ENCODE measurements at regions of chr2 and their contacts with region 1.

Region 1: DNA sequence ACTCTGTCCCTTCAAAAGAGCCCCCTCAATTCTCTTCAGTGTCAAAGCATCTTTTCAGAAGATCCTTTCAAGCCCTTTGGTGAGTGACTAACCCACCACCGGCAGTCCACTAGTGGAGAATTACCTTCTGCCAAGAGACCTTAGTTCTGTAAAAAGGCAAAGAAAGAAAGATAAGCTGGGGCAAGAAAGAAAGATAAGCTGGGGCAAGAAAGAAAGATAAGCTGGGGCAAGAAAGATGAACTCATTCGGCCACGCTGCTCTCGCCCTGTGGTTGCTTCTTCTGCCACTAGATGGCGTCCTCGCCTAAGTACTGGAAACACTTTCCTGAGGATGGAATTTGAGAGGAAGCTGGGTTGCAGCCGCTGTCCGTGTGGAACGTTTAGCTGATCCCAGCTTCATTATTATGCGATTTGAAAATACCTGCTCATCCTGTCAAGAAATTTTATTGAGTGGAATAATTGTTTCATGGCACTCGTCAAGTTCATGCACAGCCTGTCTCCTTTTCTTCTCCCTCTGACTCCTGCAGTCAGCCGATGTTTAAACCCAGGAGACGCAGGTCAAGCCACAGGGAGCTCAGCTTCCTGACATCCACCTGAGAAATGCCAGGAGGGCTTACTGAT is 17.3 kb upstream of the ANXA4 start:
- DNase-seq: peak; percentile 85 to 92
- H3K4me3 ChIP-seq: peak overlapping the region; percentile 20
- H3K4me3 Mint-ChIP-seq: peak overlapping the region; percentile 66
- H3K27ac Mint-ChIP-seq: no peak overlapping the region
- H3K4me1 ChIP-seq: peaks cover 5% of the 10 kb centered on the region
- H3K4me1 Mint-ChIP-seq: peaks cover 12% of the 10 kb centered on the region
- H3K27me3 ChIP-seq: no peaks in the 10 kb centered on the region
- H3K27me3 Mint-ChIP-seq: no peaks in the 10 kb centered on the region
- CTCF ChIP-seq: peak; percentile 83 to 95

Region 2: GRCh38 chr2:69272803-69273471 is 451.7 kb before region 1 on chr2:
- CTCF ChIA-PET with region 1: no interaction called
- POLR2A ChIA-PET with region 1: no interaction called
- intact Hi-C with region 1: no loop called
- DNase-seq: peak in 1 of 2 experiments; percentile 7
- H3K4me3 ChIP-seq: no peak overlapping the region
- H3K4me3 Mint-ChIP-seq: no peak overlapping the region
- H3K27ac Mint-ChIP-seq: no peak overlapping the region
- H3K4me1 ChIP-seq: no peaks in the 10 kb centered on the region
- H3K4me1 Mint-ChIP-seq: no peaks in the 10 kb centered on the region
- H3K27me3 ChIP-seq: no peaks in the 10 kb centered on the region
- H3K27me3 Mint-ChIP-seq: peaks cover 33% of the 10 kb centered on the region
- CTCF ChIP-seq: no peak

Region 3: DNA sequence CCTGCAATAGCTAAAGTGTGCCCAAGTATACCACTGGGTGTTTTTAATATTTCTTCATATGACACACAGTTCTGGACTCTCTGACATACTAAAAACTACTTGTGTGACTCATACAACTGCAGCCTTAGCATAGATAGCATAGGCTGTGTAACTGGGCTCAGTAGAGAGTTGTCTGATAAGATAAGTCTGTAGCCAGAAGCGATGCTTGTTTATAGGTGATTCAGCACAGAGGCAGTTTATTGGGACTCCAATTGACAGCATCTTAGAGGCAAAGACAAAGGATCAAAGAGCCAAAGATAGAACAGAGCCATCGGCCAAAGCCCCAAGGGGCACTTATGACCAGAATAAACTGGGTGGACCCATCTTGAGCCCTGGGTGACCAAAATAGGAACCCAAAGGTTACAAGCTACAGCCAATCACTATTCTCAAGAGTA is 123.5 kb before region 1 on chr2:
- CTCF ChIA-PET with region 1: no interaction called
- POLR2A ChIA-PET with region 1: no interaction called
- intact Hi-C with region 1: no loop called
- DNase-seq: peak; percentile 77 to 81
- H3K4me3 ChIP-seq: no peak overlapping the region
- H3K4me3 Mint-ChIP-seq: peak overlapping the region; percentile 42
- H3K27ac Mint-ChIP-seq: peak overlapping the region; percentile 82
- H3K4me1 ChIP-seq: peaks cover 43% of the 10 kb centered on the region
- H3K4me1 Mint-ChIP-seq: peaks cover 41% of the 10 kb centered on the region
- H3K27me3 ChIP-seq: no peaks in the 10 kb centered on the region
- H3K27me3 Mint-ChIP-seq: no peaks in the 10 kb centered on the region
- CTCF ChIP-seq: no peak

Region 4: DNA sequence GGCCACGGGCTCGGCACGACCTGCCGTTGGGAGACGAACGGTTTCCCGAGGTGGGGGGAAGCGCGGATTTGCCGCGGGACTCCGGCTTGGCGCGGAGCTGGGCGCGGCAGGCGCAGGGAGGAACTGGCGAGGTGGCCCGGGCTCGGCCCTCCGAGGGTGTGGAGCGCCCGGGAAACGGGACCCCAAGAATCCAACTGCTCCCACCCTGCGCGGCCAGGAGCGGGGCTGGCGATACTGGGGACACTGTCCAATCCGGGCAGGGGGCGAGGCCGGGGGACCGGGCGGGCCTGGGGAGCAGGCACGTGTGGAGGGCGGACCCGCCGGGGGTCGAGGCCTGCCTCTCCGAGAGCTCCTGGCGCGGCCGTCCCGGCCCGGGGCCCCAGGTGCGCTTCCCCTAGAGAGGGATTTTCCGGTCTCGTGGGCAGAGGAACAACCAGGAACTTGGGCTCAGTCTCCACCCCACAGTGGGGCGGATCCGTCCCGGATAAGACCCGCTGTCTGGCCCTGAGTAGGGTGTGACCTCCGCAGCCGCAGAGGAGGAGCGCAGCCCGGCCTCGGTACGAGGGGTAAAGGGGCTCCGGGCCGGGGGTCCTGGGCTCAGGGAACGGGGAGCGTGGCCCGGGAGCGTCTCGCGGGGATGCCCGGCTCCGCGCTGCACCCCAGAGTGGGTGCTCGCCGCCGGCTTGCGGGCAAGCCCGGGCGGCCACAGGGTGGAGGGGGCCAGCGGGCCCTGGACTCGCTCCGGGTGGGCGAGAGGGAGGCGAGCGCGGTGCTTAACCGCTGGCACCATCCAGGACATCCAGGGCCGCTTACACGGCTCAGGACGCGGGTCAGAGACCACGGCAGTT is 17.2 kb after region 1 on chr2 and contains the start of gene ANXA4:
- CTCF ChIA-PET with region 1: interaction called, 52 read pairs
- POLR2A ChIA-PET with region 1: interaction called, 12 read pairs
- intact Hi-C with region 1: no loop called
- DNase-seq: peak; percentile 92 to 93
- H3K4me3 ChIP-seq: peak within 1 kb of the TSS; percentile 78
- H3K4me3 Mint-ChIP-seq: peak within 1 kb of the TSS; percentile 97
- H3K27ac Mint-ChIP-seq: peak within 1 kb of the TSS; percentile 96
- H3K4me1 ChIP-seq: peaks cover 20% of the 10 kb centered on the region
- H3K4me1 Mint-ChIP-seq: peaks cover 23% of the 10 kb centered on the region
- H3K27me3 ChIP-seq: no peaks in the 10 kb centered on the region
- H3K27me3 Mint-ChIP-seq: no peaks in the 10 kb centered on the region
- CTCF ChIP-seq: no peak
- total RNA-seq, gene ANXA4: 90.8 and 92.0 TPM in 2 replicates

Region 5: DNA sequence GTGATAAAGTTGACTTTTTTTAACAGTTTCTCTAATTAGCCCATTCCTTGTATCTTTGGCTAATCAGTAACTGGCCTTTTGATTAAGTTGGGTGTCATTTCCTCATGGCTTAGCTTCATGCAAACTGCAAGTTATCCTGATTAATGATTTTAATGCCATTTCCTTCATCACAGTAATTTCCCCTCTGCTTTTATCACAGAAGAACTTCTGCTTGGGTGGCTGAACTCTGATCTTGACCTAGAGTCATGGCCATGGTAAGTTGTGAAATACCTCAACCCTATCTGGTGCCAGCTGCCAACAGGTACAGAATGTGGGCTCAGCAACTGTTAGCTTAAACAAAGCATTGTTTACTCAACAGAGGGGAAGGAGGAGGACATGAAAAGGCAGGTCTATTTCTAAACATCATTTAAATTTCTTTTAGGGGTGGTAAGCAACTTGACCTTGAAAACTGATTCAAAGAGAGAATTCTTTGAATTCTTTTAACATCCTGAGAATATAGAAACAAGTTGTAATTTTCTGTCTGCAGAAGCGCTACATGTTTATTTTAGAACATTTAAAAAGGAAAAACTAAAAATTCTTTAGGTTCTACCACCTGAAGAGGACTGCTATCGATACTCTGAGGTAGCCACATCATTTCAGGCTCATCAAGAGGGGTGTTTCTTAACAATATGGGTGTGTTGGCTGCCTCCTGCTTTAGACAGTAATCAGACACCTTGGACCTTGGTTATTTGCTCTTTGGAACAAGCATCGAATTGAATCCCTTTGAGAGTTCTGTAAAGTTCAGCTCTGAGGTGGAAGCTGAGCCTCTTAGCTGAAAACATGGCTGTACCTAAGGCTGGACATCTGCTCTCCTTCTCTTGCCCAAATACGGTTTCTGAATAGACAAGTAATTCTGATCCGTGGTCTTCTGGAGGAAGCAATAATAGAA is 56.9 kb after region 1 on chr2:
- CTCF ChIA-PET with region 1: interaction called, 13 read pairs
- POLR2A ChIA-PET with region 1: no interaction called
- intact Hi-C with region 1: no loop called
- DNase-seq: peak; percentile 67 to 79
- H3K4me3 ChIP-seq: no peak overlapping the region
- H3K4me3 Mint-ChIP-seq: no peak overlapping the region
- H3K27ac Mint-ChIP-seq: peak overlapping the region; percentile 16
- H3K4me1 ChIP-seq: peaks cover 62% of the 10 kb centered on the region
- H3K4me1 Mint-ChIP-seq: peaks cover 39% of the 10 kb centered on the region
- H3K27me3 ChIP-seq: no peaks in the 10 kb centered on the region
- H3K27me3 Mint-ChIP-seq: no peaks in the 10 kb centered on the region
- CTCF ChIP-seq: no peak

Region 6: DNA sequence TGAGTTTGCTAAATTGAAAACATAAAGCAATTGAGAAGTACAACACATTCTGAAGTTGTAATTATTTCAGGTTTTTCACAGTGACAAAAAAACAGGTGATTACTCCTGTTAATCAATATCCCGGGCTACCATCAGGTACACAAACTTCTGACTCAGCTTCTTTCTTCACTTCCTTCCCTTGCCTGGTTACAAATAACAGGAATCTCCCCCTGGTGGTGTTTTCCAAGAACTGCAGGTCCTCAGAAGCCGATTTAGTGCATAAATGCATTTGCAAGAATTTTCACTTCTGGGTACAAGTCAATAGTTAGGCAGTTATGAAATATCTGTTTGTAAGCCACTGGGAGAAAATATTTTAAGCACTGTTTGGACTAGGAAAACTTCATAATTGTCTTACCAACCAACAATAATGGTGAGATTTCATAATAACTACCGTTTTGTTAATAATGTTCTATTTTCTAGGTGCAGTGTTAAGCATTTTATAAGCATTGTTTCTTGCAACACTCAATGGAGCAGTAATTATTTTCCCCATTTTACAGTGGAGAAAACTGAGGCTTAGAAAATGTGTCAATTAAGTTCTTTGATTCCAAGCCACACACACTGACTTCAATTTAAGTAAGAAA is 92.4 kb after region 1 on chr2:
- CTCF ChIA-PET with region 1: interaction called, 198 read pairs
- POLR2A ChIA-PET with region 1: interaction called, 9 read pairs
- intact Hi-C with region 1: loop called (anchors 1 kb)
- DNase-seq: peak; percentile 83 to 84
- H3K4me3 ChIP-seq: no peak overlapping the region
- H3K4me3 Mint-ChIP-seq: no peak overlapping the region
- H3K27ac Mint-ChIP-seq: no peak overlapping the region
- H3K4me1 ChIP-seq: no peaks in the 10 kb centered on the region
- H3K4me1 Mint-ChIP-seq: no peaks in the 10 kb centered on the region
- H3K27me3 ChIP-seq: no peaks in the 10 kb centered on the region
- H3K27me3 Mint-ChIP-seq: no peaks in the 10 kb centered on the region
- CTCF ChIP-seq: peak; percentile 90 to 91

Region 7: GRCh38 chr2:69893684-69894551 is 169.3 kb after region 1 on chr2 and contains the start of gene SNRNP27:
- CTCF ChIA-PET with region 1: interaction called, 12 read pairs
- POLR2A ChIA-PET with region 1: no interaction called
- intact Hi-C with region 1: no loop called
- DNase-seq: peak; percentile 77 to 81
- H3K4me3 ChIP-seq: peak within 1 kb of the TSS; percentile 51
- H3K4me3 Mint-ChIP-seq: peak within 1 kb of the TSS; percentile 87
- H3K27ac Mint-ChIP-seq: peak within 1 kb of the TSS; percentile 93
- H3K4me1 ChIP-seq: no peaks in the 10 kb centered on the region; the same call in 1 of the 2 replicates
- H3K4me1 Mint-ChIP-seq: peaks cover 7% of the 10 kb centered on the region
- H3K27me3 ChIP-seq: no peaks in the 10 kb centered on the region
- H3K27me3 Mint-ChIP-seq: no peaks in the 10 kb centered on the region
- CTCF ChIP-seq: no peak
- total RNA-seq, gene SNRNP27: 49.3 and 49.7 TPM in 2 replicates